PC-9 (cell line): ENCODE measurements at regions of chr2 and their contacts with region 1.

Region 1: GRCh38 chr2:75560768-75561565 is at the start of gene EVA1A:
- DNase-seq: peak; percentile 61 to 68
- H3K4me3 ChIP-seq: peak within 1 kb of the TSS; percentile 74
- H3K27ac ChIP-seq: peak within 1 kb of the TSS; percentile 42
- H3K4me1 ChIP-seq: peaks cover 28% of the 10 kb centered on the region
- H3K27me3 ChIP-seq: no peaks in the 10 kb centered on the region
- CTCF ChIP-seq: no peak
- total RNA-seq, gene EVA1A: 10.8 and 18.2 TPM in 2 replicates

Region 2: DNA sequence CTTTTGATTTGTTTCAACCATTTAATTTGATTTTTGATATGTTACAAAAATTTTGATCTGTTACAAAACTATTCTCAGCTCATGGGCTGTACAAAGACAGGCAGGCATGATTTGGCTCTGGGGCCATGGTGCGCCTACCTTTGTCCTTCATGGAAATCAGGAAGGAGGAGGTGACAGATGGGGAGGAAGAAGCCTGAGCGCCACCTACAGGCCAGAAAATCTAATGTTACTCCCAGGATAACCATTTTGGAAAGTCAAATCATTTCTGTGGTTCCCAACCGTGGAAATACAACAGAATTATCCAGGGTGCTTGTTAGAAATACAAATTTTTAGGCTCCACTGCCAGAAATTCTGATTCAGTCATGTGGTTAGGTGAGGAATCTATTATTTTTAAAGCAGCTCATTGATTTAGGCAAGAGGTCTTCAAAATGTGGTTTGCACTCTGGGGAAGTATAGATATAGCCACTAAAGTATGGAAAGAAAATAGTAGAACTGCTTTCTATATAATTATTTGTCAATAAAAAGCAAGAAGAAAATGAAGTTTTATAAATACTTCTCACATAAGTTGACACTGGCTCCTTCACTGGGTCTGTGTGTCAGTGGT is 94.2 kb before region 1 on chr2:
- CTCF ChIA-PET with region 1: interaction called, 3 read pairs
- POLR2A ChIA-PET with region 1: no interaction called
- intact Hi-C with region 1: loop called (anchors 5 kb)
- DNase-seq: peak in 1 of 2 experiments; percentile 33
- H3K4me3 ChIP-seq: no peak overlapping the region
- H3K27ac ChIP-seq: no peak overlapping the region
- H3K4me1 ChIP-seq: peaks cover 14% of the 10 kb centered on the region; the same call in 1 of the 2 replicates
- H3K27me3 ChIP-seq: no peaks in the 10 kb centered on the region
- CTCF ChIP-seq: peak; percentile 73

Region 3: GRCh38 chr2:75523313-75524275 is 37.4 kb before region 1 on chr2:
- CTCF ChIA-PET with region 1: no interaction called
- POLR2A ChIA-PET with region 1: no interaction called
- intact Hi-C with region 1: loop called (anchors 5 kb)
- DNase-seq: peak; percentile 52 to 99
- H3K4me3 ChIP-seq: no peak overlapping the region
- H3K27ac ChIP-seq: peak overlapping the region; percentile 17
- H3K4me1 ChIP-seq: peaks cover 59% of the 10 kb centered on the region
- H3K27me3 ChIP-seq: no peaks in the 10 kb centered on the region
- CTCF ChIP-seq: no peak

Region 4: GRCh38 chr2:75592028-75592427 is 31.1 kb after region 1 on chr2:
- CTCF ChIA-PET with region 1: no interaction called
- POLR2A ChIA-PET with region 1: no interaction called
- intact Hi-C with region 1: loop called (anchors 2 kb)
- DNase-seq: peak; percentile 65 to 99
- H3K4me3 ChIP-seq: no peak overlapping the region
- H3K27ac ChIP-seq: peak overlapping the region; percentile 84
- H3K4me1 ChIP-seq: peaks cover 59% of the 10 kb centered on the region
- H3K27me3 ChIP-seq: no peaks in the 10 kb centered on the region
- CTCF ChIP-seq: no peak

Region 5: DNA sequence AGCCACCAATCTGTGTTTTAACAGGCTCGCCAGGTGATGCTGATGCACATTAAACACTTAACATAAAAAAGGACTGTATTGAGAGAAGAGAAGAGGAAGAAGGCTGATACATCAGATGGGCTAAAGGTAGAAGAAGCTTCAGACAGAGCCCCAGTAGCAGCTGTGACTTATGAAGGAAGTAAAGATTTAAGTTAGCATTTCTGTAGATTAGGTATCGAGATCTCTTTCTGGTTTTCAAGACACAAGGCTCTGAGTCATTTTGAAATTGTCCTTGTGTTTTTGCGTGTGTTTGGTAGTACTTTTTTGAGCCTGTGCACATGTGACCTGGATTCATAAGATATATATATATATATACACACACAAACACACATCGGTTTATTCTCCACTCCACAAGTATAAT is 190.4 kb after region 1 on chr2:
- CTCF ChIA-PET with region 1: no interaction called
- POLR2A ChIA-PET with region 1: no interaction called
- intact Hi-C with region 1: no loop called
- DNase-seq: no peak
- H3K4me3 ChIP-seq: no peak overlapping the region
- H3K27ac ChIP-seq: no peak overlapping the region
- H3K4me1 ChIP-seq: no peaks in the 10 kb centered on the region
- H3K27me3 ChIP-seq: peaks cover 4% of the 10 kb centered on the region; the same call in 1 of the 2 replicates
- CTCF ChIP-seq: no peak